HEK293 (cell line): ENCODE measurements at regions of chr6 and their contacts with region 1.

Region 1: DNA sequence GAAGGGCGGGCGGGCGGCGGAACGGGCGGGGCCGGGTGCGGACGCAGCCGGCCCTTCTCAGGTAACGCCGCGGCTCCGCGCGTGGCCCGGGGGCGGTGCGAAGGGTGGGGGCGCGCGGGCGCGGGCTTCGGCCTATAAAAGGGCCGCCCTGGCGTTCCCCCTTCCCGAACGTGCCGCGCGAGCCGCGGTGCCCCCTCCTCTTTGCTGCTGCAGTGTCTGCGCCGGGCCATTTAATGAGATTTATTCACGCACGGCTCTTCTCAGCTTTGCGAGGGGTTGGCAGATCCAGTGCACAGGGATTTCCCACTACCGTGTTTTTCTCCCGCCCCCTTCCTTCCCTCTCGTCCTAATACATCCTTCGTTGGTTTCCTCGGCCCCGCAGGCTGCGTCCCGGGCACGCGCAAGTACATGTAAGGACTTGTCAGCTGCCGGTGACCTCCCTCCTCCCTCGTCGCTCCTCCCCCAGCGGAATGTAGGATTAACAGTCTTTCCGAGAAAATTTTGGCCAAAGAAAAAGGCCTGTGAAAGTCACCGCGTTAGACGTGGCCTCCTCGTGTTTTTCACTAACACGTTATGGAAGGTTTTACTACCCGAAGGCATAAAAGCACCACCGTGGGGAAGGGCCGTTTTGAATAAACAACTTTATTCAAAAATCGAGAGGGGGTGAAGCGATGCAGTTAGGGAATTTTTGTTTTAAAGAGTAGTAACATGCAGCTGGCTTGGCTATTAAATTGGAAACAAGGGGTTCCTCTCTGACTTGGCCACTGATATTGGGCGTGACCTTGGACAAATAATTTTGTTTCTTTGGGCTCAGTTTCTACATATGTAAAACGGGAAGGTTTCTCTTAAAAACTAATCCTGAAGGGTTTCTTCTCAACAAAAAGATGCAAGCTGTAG is 966 bp upstream of the REV3L start:
- H3K4me3 ChIP-seq: peak overlapping the region; percentile 70
- H3K27ac ChIP-seq: peak overlapping the region; percentile 100
- H3K4me1 ChIP-seq: peaks cover 8% of the 10 kb centered on the region
- CTCF ChIP-seq: no peak

Region 2: GRCh38 chr6:110013386-110013785 is 1470.6 kb before region 1 on chr6:
- CTCF ChIA-PET with region 1: no interaction called
- POLR2A ChIA-PET with region 1: no interaction called
- H3K4me3 ChIP-seq: no peak overlapping the region
- H3K27ac ChIP-seq: no peak overlapping the region
- H3K4me1 ChIP-seq: no peaks in the 10 kb centered on the region
- CTCF ChIP-seq: no peak

Region 3: DNA sequence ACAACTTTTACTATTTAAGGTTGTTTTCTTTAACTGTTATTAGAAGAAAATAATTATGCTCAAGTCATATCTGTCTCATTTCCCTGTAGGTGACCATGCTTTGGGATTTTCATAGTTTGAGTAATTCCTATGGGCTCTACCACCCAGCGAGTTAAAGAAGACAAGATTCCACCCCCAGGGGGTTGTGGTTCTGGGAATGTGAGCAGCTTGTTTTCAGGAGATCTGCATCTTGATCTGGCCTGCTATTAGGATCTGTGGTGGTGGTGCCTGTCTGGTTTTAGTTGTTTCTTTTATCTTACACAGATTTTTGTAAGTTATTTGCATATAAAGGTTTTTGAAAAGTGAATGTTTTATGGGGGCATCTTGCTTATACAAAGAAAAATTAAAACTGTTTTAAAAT is 19.2 kb after region 1 on chr6:
- CTCF ChIA-PET with region 1: no interaction called
- POLR2A ChIA-PET with region 1: interaction called, 14 read pairs
- H3K4me3 ChIP-seq: no peak overlapping the region
- H3K27ac ChIP-seq: peak overlapping the region; percentile 32; the same call in 1 of the 2 replicates
- H3K4me1 ChIP-seq: peaks cover 7% of the 10 kb centered on the region; the same call in 1 of the 2 replicates
- CTCF ChIP-seq: no peak

Region 4: GRCh38 chr6:111520524-111520923 is 36.5 kb after region 1 on chr6:
- CTCF ChIA-PET with region 1: no interaction called
- POLR2A ChIA-PET with region 1: no interaction called
- H3K4me3 ChIP-seq: no peak overlapping the region
- H3K27ac ChIP-seq: no peak overlapping the region
- H3K4me1 ChIP-seq: peaks cover 3% of the 10 kb centered on the region; the same call in 1 of the 2 replicates
- CTCF ChIP-seq: no peak

Region 5: DNA sequence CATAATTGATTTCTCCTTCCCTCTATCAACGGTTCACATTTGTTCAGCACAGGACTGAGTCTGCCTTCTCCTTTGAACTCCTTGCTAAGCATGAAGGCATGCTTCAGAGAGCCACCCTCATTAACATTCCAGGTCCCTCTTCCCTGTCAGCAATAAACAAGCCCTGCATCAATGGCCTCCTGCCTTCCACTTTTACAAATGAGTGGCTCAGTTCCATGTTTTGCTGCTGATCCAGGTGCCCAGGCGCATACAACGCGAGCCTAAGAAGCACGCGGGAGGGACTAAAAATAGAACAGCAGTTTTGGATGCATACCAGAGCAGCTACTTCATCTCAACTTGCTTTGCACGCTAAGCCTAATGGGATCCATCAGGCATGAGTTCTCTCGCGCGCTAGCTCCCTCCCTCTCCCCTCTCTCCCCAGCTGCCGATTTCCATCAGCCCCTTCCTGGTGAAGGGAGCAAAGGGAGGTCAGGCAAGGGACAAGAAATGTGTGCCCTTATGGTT is 68.3 kb after region 1 on chr6:
- CTCF ChIA-PET with region 1: interaction called, 4 read pairs
- POLR2A ChIA-PET with region 1: interaction called, 48 read pairs
- H3K4me3 ChIP-seq: peak overlapping the region; percentile 19
- H3K27ac ChIP-seq: peak overlapping the region; percentile 96
- H3K4me1 ChIP-seq: peaks cover 41% of the 10 kb centered on the region
- CTCF ChIP-seq: no peak

Region 6: GRCh38 chr6:111573892-111574797 is 90.2 kb after region 1 on chr6:
- CTCF ChIA-PET with region 1: no interaction called
- POLR2A ChIA-PET with region 1: interaction called, 19 read pairs
- H3K4me3 ChIP-seq: no peak overlapping the region
- H3K27ac ChIP-seq: no peak overlapping the region
- H3K4me1 ChIP-seq: peaks cover 17% of the 10 kb centered on the region
- CTCF ChIP-seq: no peak

Region 7: DNA sequence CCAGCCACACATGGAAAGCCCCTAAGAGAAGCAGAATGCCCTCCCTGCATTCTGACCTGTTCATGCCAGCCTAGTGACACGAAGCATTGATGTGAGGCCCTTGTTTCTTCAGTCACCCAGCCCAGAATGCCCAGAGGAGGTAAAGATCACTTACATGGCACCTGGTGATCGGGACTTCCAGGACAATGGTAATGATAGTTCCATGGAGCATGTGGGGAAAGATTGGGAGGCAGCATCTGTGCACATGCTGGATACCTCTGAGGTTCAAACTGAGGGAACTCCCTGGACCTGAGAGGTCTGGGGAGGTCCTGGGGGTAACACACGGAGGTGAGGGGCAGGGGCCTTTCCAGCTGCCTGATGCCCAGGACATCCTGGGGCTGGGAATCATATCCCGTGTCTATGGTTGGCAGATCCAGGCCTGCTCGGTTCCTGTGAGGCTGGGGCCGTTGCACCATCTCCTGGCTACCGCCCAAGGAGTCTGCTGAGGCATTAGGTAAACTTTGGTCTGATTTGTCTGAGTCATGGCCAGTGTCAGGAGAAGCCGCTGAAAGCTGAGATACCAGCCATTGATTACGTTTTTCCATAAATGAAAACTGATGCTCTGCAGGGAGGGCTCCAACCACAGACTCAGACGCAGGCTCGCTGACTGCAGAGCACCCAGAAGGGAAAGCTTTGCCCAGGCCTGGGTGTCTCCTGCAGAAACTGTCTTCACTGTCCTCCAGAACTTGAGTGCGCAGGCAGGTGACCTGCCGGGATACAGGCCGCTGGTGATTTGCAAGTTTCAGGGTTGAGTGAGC is 107.3 kb after region 1 on chr6:
- CTCF ChIA-PET with region 1: interaction called, 3 read pairs
- POLR2A ChIA-PET with region 1: interaction called, 11 read pairs
- H3K4me3 ChIP-seq: no peak overlapping the region
- H3K27ac ChIP-seq: peak overlapping the region; percentile 56
- H3K4me1 ChIP-seq: peaks cover 24% of the 10 kb centered on the region
- CTCF ChIP-seq: no peak

Region 8: DNA sequence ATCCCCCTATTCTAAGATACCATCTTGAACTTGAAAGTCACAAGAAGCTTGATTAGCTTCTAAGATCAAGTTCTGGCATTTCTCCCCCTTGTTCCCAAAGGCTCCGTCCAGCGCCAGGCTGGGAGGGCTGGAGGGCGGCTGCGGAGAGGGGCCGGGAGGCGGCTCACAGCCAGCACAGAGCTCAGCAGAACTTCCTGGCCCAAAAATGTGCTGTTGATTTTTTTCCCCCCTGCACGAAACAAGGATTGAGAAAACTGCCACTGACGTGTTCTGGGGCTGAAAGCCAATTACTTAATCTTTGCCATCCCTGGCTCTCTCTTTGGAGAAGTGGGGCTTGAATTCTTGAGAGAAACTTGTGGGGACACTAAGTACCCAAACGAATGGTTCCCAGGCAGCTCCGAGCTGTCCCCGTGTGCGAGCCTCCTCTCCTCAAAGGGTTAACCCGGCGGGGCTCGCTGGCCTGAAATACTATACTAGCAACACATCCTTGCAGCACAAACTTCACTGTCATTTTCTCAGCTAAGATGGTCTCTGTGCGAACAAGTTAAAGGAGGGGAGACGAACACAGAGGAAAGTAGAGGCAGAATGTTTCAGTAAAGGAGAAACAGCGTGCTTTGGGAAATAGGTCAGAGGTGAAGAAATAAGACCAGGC is 121.2 kb after region 1 on chr6:
- CTCF ChIA-PET with region 1: interaction called, 5 read pairs
- POLR2A ChIA-PET with region 1: interaction called, 56 read pairs
- H3K4me3 ChIP-seq: peak overlapping the region; percentile 61
- H3K27ac ChIP-seq: peak overlapping the region; percentile 79
- H3K4me1 ChIP-seq: peaks cover 25% of the 10 kb centered on the region
- CTCF ChIP-seq: no peak